ENCODE measurements at regions of chr10 and their contacts with region 1.

Region 1: DNA sequence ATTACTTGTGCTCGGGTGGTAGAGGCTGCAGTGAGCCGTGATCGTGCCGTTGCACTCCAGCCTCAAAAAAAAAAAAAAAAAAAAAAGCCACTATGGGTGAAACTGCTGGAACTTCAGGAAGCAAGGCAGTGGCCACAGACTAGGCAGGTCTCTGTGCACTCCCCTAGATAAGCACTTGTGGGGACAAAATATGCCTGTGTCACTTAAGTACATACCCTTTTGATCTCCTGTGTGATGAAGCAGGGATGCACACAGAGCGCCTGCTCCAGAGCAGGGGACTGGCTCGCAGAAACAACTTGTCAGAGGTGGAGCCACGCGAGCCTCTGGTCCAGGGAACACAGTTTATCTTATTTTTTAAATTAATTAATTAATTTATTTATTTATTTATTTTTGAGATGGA is 42.9 kb upstream of the PSAP start:
- DNase-seq: no peak
- H3K4me3 Mint-ChIP-seq: no peak overlapping the region
- H3K27ac Mint-ChIP-seq: no peak overlapping the region
- H3K4me1 Mint-ChIP-seq: peaks cover 7% of the 10 kb centered on the region
- H3K27me3 Mint-ChIP-seq: no peaks in the 10 kb centered on the region
- CTCF ChIP-seq: no peak

Region 2: GRCh38 chr10:71812016-71812912 is 81.7 kb before region 1 on chr10:
- CTCF ChIA-PET with region 1: interaction called, 7 read pairs
- POLR2A ChIA-PET with region 1: no interaction called
- intact Hi-C with region 1: loop called (anchors 1 kb)
- DNase-seq: peak; percentile 62
- H3K4me3 Mint-ChIP-seq: no peak overlapping the region
- H3K27ac Mint-ChIP-seq: no peak overlapping the region
- H3K4me1 Mint-ChIP-seq: no peaks in the 10 kb centered on the region
- H3K27me3 Mint-ChIP-seq: no peaks in the 10 kb centered on the region
- CTCF ChIP-seq: peak; percentile 91

Region 3: DNA sequence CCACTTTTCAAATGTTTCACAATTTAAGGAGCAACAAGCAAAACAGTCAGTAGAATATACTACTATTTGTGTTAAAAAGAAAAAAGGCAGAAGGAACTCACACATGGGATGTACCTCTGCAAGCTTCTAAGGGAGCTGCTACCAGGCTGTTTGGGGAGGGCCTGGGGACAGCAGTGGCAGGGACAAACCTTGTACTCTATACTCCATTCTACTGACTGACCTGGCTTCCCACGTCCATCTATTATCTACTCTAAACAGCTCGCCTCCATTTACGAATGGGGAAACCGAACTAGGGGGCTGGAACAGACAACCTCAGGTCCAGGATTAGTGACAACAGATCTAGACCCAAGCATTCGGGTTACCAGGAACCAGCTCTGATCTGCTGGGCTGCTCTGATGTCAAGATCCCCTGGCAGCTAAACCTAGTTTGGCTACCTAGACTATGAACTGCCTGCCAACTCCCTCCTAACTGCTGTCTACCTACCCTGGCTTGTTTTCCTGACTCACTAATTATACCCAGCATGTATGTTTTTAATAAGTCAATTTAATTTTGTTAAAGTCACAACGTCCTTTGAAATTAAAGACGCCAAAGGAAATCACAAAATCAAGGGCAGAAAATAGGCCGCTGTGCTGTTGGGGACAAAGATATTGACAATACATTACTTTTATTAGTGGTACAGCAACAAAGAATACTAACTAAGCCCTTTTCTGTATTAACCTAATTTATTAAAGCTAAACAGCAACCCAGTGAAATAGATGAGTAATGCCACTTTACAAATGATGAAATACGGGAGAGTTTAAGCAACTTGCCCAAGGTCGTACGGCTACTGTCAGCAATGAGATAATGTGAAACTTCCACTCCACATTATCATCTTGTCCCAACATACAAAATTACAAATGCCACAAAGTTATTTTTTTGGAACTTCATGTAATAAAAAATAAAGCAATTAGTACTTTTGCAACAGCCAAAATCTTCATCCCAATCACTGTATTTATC is 48.2 kb before region 1 on chr10:
- CTCF ChIA-PET with region 1: interaction called, 22 read pairs
- POLR2A ChIA-PET with region 1: interaction called, 11 read pairs
- intact Hi-C with region 1: no loop called
- DNase-seq: peak; percentile 42
- H3K4me3 Mint-ChIP-seq: no peak overlapping the region
- H3K27ac Mint-ChIP-seq: peak overlapping the region; percentile 39
- H3K4me1 Mint-ChIP-seq: peaks cover 52% of the 10 kb centered on the region
- H3K27me3 Mint-ChIP-seq: no peaks in the 10 kb centered on the region
- CTCF ChIP-seq: no peak

Region 4: GRCh38 chr10:71916827-71917226 is 22.9 kb after region 1 on chr10:
- CTCF ChIA-PET with region 1: interaction called, 10 read pairs
- POLR2A ChIA-PET with region 1: no interaction called
- intact Hi-C with region 1: no loop called
- DNase-seq: no peak
- H3K4me3 Mint-ChIP-seq: no peak overlapping the region
- H3K27ac Mint-ChIP-seq: no peak overlapping the region
- H3K4me1 Mint-ChIP-seq: peaks cover 11% of the 10 kb centered on the region
- H3K27me3 Mint-ChIP-seq: no peaks in the 10 kb centered on the region
- CTCF ChIP-seq: no peak

Region 5: DNA sequence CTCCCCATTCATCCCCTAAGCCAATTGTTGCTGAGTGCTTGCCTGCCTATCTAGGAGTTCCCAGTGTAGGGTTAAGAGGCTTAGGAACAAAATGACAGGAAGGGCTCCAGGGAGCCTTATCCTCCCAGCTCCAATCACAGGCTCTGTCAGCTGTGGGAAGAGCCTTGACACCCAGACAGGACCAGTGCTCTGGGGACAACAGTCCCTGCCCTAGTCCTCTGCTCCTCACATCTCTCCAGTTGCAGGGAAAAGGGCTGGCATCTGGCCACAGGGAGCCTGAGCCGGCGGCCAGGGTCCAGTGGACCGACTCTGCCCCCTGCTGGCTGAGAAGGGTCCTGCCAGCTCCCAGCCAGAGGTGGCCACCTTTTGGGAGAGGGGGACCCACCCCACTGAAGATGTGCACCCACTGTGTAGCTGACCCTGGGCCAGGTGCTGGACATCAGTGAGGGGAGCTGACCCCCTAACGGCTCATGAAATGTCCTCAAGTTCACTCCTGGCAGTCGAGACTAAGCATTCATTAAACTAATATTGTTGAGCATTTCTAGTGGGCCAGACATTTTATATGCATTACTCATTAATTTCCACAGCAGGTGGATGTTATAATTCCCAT is 443.2 kb after region 1 on chr10:
- CTCF ChIA-PET with region 1: interaction called, 10 read pairs
- POLR2A ChIA-PET with region 1: no interaction called
- intact Hi-C with region 1: loop called (anchors 5 kb)
- DNase-seq: peak; percentile 93
- H3K4me3 Mint-ChIP-seq: peak overlapping the region; percentile 72
- H3K27ac Mint-ChIP-seq: peak overlapping the region; percentile 79
- H3K4me1 Mint-ChIP-seq: peaks cover 42% of the 10 kb centered on the region
- H3K27me3 Mint-ChIP-seq: no peaks in the 10 kb centered on the region
- CTCF ChIP-seq: peak; percentile 96